ENCODE measurements at regions of chr18 and their contacts with region 1.

Region 1: DNA sequence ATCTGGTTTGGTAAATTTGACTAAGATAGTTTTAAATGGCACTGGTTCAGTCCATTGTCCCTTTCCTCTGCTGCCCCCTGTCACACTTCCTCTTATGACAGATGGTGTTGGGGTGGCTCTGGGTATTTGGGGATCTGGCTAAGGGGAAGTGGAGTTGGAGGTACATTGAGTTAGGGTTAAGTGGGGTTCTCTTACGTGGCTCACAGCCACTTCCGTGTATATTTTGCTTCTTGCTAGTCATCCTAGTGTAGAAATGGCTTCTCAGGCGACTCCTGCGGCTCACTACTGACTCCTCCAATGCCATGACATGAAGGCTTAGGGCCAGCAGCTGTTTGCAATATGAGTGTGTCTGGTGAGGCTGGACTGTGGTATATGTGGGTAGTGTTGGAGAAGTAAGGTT is 187.0 kb downstream of the HAUS1 start:
- DNase-seq: no peak
- ATAC-seq: no peak
- H3K4me3 Mint-ChIP-seq: no peak overlapping the region
- H3K27ac Mint-ChIP-seq: no peak overlapping the region
- H3K4me1 Mint-ChIP-seq: peaks cover 29% of the 10 kb centered on the region
- H3K27me3 Mint-ChIP-seq: no peaks in the 10 kb centered on the region; the same call in 1 of the 2 replicates
- CTCF ChIP-seq: no peak

Region 2: GRCh38 chr18:46273829-46274228 is 17.3 kb before region 1 on chr18:
- CTCF ChIA-PET with region 1: no interaction called
- POLR2A ChIA-PET with region 1: interaction called, 10 read pairs
- DNase-seq: no peak
- ATAC-seq: no peak
- H3K4me3 Mint-ChIP-seq: no peak overlapping the region
- H3K27ac Mint-ChIP-seq: no peak overlapping the region
- H3K4me1 Mint-ChIP-seq: peaks cover 25% of the 10 kb centered on the region
- H3K27me3 Mint-ChIP-seq: no peaks in the 10 kb centered on the region
- CTCF ChIP-seq: no peak

Region 3: DNA sequence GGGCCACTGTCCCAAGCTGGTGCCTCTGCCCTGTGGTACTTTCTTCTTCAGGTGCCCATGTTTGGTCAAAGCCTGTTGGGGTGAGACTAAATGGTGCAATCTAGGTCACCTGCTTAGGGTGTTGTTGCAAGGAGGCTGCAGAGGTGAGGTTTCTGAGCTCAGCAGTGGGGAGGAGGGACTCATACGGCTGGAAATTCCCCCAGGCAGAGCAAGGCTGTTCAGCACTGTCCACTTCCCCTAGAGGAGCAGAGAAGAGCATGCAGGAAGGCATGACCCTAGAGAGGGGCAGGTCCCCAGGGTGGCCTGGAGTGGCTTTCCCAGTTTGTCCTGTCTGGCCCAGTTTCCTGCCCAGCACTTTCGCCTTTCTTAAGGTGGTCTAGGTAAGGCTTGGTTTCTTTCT is 24.0 kb after region 1 on chr18:
- CTCF ChIA-PET with region 1: no interaction called
- POLR2A ChIA-PET with region 1: no interaction called
- DNase-seq: no peak
- ATAC-seq: no peak
- H3K4me3 Mint-ChIP-seq: no peak overlapping the region
- H3K27ac Mint-ChIP-seq: no peak overlapping the region
- H3K4me1 Mint-ChIP-seq: peaks cover 18% of the 10 kb centered on the region
- H3K27me3 Mint-ChIP-seq: no peaks in the 10 kb centered on the region; the same call in 1 of the 2 replicates
- CTCF ChIP-seq: no peak

Measured in WTC11 (cell line).